GM12878 (cell line): ENCODE measurements at regions of chr1 and their contacts with region 1.

Region 1: GRCh38 chr1:155063550-155064110 is at the start of gene EFNA4:
- DNase-seq: no peak
- ATAC-seq: peak; percentile 90
- H3K4me3 ChIP-seq: peak within 1 kb of the TSS; percentile 95
- H3K27ac ChIP-seq: peak within 1 kb of the TSS; percentile 51
- H3K4me1 ChIP-seq: peaks cover 16% of the 10 kb centered on the region
- H3K27me3 ChIP-seq: no peaks in the 10 kb centered on the region
- CTCF ChIP-seq: no peak
- EP300 ChIP-seq: no peak
- POLR2A ChIP-seq: peak; percentile 85
- RAD21 ChIP-seq: no peak
- polyA plus RNA-seq, gene EFNA4: 0.52 to 1.3 TPM

Region 2: GRCh38 chr1:154974063-154974807 is 89.4 kb before region 1 on chr1 and contains the start of gene CKS1B:
- CTCF ChIA-PET with region 1: interaction called, 6 read pairs
- POLR2A ChIA-PET with region 1: interaction called, 3 read pairs
- RAD21 ChIA-PET with region 1: no interaction called
- SMC1A ChIA-PET with region 1: interaction called, 3 read pairs
- in situ Hi-C with region 1: no loop called
- intact Hi-C with region 1: loop called (anchors 5 kb)
- DNase-seq: peak; percentile 100
- ATAC-seq: peak; percentile 87
- H3K4me3 ChIP-seq: peak within 1 kb of the TSS; percentile 90
- H3K27ac ChIP-seq: peak within 1 kb of the TSS; percentile 96
- H3K4me1 ChIP-seq: peaks cover 28% of the 10 kb centered on the region
- H3K27me3 ChIP-seq: no peaks in the 10 kb centered on the region
- CTCF ChIP-seq: no peak
- EP300 ChIP-seq: no peak
- POLR2A ChIP-seq: peak; percentile 85
- RAD21 ChIP-seq: no peak
- polyA plus RNA-seq, gene CKS1B: 598 to 608 TPM

Region 3: DNA sequence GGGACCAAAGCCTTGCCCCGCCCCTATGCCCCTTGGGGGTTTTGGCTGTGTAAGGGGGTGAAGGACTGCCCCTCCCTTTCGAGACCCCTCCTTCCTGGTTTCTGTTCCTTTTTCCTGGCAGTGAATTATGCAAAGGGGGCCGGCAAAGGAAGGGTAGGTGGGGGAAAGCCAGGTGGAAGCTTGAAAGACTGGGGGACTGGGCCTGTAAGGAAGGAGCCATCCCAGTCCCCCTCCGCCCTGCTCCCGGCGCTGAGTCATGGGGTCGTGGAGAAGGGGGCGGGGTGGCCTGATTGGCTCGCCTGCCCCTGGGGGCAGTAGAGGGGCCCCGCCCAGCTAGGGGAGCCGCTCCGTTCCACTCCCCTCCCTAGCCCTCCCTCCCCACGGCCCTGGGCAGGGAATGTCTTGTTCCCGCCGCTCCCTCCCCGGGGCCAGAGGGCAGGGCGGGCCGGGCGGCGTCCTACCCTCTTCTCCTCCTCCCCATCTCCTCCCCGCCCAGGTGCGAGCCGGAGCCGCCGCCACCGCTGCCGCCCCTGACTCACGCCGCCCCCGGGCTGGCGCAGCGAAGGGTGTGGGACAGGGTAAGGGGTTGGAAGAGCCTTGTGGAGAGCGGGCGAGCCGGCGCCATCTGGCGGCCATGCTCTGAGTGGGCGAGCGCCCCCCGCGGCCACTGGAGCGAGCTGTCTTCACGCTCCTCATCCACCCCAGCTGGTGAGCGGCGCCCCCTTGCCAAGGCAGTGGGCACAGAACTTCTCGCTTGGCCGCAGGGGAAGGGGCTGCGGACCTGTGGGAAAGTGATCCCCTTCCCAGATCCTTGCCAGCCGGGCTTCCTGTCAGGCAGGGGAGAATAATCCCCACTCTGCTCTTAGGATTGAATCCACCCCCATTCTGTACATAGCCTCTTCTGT is 46.3 kb before region 1 on chr1:
- CTCF ChIA-PET with region 1: interaction called, 6 read pairs
- POLR2A ChIA-PET with region 1: no interaction called
- RAD21 ChIA-PET with region 1: no interaction called
- SMC1A ChIA-PET with region 1: interaction called, 5 read pairs
- in situ Hi-C with region 1: no loop called
- intact Hi-C with region 1: loop called (anchors 1 kb)
- DNase-seq: peak; percentile 47
- ATAC-seq: peak; percentile 98
- H3K4me3 ChIP-seq: peak overlapping the region; percentile 65
- H3K27ac ChIP-seq: peak overlapping the region; percentile 75
- H3K4me1 ChIP-seq: peaks cover 23% of the 10 kb centered on the region
- H3K27me3 ChIP-seq: no peaks in the 10 kb centered on the region
- CTCF ChIP-seq: peak; percentile 99 to 100 (median 100); a peak in 5 of 6 replicates
- EP300 ChIP-seq: 0 out of 4 replicates have a peak, but pooled peaks of 1 of the 2 experiments have one; percentile 26
- POLR2A ChIP-seq: peak; percentile 69
- RAD21 ChIP-seq: peak; percentile 64

Region 4: DNA sequence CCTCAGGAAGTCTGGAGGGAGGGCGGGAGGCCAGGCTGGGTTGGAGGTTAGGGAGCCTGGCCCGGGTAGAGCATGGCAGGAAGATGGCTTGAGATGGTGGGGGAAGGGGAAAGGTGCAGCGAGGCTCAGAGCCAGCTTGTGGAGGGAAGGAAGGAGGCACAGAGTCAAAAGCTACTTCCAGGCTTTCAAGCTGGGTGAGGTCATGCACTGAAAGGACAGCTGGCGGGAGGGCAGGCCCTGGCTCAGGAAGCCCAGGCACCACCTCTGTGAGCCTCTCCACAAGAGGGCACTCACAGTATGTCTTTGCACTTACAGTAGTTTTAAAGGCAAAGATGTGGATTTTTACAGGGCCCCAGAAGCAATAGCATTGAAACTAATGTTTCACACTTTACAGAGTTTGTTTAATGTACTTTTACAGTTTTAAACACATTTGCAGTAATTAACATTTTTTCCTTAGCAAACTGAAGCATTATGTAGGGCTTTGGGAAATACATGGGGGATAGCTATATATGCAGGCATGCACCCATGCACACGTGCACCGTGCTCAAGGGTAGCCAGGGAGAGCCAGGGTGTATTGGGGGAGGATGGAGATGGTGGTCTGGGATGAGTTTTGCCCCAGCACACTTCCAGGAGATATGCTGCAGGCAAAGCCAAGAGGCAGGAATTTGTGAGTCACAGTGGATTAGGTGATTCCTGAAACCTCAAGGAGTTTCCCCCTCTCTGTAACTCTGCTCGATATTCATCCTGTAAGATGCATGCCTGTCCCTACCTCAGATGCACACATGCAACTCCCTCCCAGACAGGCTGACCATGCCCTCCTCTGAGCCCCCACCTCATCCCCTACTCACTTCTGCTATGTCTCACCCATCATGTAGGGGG is 18.6 kb before region 1 on chr1:
- CTCF ChIA-PET with region 1: interaction called, 121 read pairs
- POLR2A ChIA-PET with region 1: interaction called, 3 read pairs
- RAD21 ChIA-PET with region 1: interaction called, 14 read pairs
- SMC1A ChIA-PET with region 1: interaction called, 13 read pairs
- in situ Hi-C with region 1: no loop called
- intact Hi-C with region 1: loop called (anchors 1 kb)
- DNase-seq: no peak
- ATAC-seq: peak; percentile 98
- H3K4me3 ChIP-seq: no peak overlapping the region
- H3K27ac ChIP-seq: no peak overlapping the region
- H3K4me1 ChIP-seq: peaks cover under 1% of the 10 kb centered on the region; the same call in 1 of the 2 replicates
- H3K27me3 ChIP-seq: peaks cover 2 to 3% of the 10 kb centered on the region in 2 experiments; a peak in 2 of 4 replicates
- CTCF ChIP-seq: peak; percentile 76 to 87 (median 84)
- EP300 ChIP-seq: no peak
- POLR2A ChIP-seq: no peak
- RAD21 ChIP-seq: peak; percentile 71

Region 5: GRCh38 chr1:155050560-155051341 is 12.9 kb before region 1 on chr1 and contains the start of gene ADAM15:
- CTCF ChIA-PET with region 1: interaction called, 121 read pairs
- POLR2A ChIA-PET with region 1: no interaction called
- RAD21 ChIA-PET with region 1: interaction called, 14 read pairs
- SMC1A ChIA-PET with region 1: interaction called, 13 read pairs
- in situ Hi-C with region 1: no loop called
- intact Hi-C with region 1: loop called (anchors 1 kb)
- DNase-seq: no peak
- ATAC-seq: peak; percentile 89
- H3K4me3 ChIP-seq: peak within 1 kb of the TSS; percentile 91
- H3K27ac ChIP-seq: peak within 1 kb of the TSS; percentile 15; the same call in 1 of the 2 replicates
- H3K4me1 ChIP-seq: peaks cover 13% of the 10 kb centered on the region
- H3K27me3 ChIP-seq: no peaks in the 10 kb centered on the region
- CTCF ChIP-seq: peak; percentile 91 to 92 (median 91)
- EP300 ChIP-seq: no peak
- POLR2A ChIP-seq: peak; percentile 51; the same call in 1 of the 2 replicates
- RAD21 ChIP-seq: peak; percentile 35; the same call in 1 of the 2 replicates
- polyA plus RNA-seq, gene ADAM15: 0.29 to 0.79 TPM

Region 6: GRCh38 chr1:155078469-155079209 is 15.0 kb after region 1 on chr1 and contains the start of gene EFNA3:
- CTCF ChIA-PET with region 1: interaction called, 195 read pairs
- POLR2A ChIA-PET with region 1: interaction called, 5 read pairs
- RAD21 ChIA-PET with region 1: interaction called, 7 read pairs
- SMC1A ChIA-PET with region 1: interaction called, 8 read pairs
- in situ Hi-C with region 1: no loop called
- intact Hi-C with region 1: no loop called
- DNase-seq: no peak
- ATAC-seq: peak; percentile 70
- H3K4me3 ChIP-seq: peak within 1 kb of the TSS; percentile 59; the same call in 1 of the 2 replicates
- H3K27ac ChIP-seq: no peak within 1 kb of the TSS
- H3K4me1 ChIP-seq: peaks cover 27% of the 10 kb centered on the region
- H3K27me3 ChIP-seq: peaks cover 21 to 25% of the 10 kb centered on the region in 2 experiments
- CTCF ChIP-seq: no peak
- EP300 ChIP-seq: no peak
- POLR2A ChIP-seq: no peak
- RAD21 ChIP-seq: no peak
- polyA plus RNA-seq, gene EFNA3: 0.08 to 0.26 TPM

Region 7: GRCh38 chr1:155084722-155085503 is 21.3 kb after region 1 on chr1:
- CTCF ChIA-PET with region 1: interaction called, 195 read pairs
- POLR2A ChIA-PET with region 1: interaction called, 12 read pairs
- RAD21 ChIA-PET with region 1: interaction called, 63 read pairs
- SMC1A ChIA-PET with region 1: interaction called, 14 read pairs
- in situ Hi-C with region 1: no loop called
- intact Hi-C with region 1: loop called (anchors 1 kb)
- DNase-seq: peak; percentile 72
- ATAC-seq: peak; percentile 90
- H3K4me3 ChIP-seq: peak overlapping the region; percentile 72
- H3K27ac ChIP-seq: peak overlapping the region; percentile 72
- H3K4me1 ChIP-seq: peaks cover 33% of the 10 kb centered on the region
- H3K27me3 ChIP-seq: peaks cover 17 to 23% of the 10 kb centered on the region in 2 experiments
- CTCF ChIP-seq: peak; percentile 90 to 99 (median 95)
- EP300 ChIP-seq: 0 out of 4 replicates have a peak, but pooled peaks of 1 of the 2 experiments have one; percentile 48
- POLR2A ChIP-seq: no peak; the same call in 1 of the 2 replicates
- RAD21 ChIP-seq: peak; percentile 99